Posterior vena cava (tissue), 2 donors: ENCODE measurements at regions of chr4 and their contacts with region 1.

Region 1: DNA sequence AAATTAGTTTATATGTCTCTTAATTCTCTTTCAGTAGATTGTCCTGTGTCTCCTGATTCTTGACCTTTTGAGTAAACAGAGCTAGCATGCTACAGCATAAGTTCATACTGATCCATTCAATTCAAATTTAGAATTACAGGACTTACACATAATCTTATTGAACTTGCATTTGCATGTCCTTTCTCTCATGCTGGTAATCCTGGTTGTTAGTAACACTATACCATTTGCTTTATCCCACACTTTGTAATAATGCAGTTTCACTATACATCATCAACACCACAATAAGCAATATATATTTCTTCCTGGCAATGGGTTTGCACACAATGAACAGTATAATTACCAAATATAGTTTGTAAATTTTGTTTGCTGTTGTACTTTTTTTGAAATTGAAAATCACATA is 937.2 kb upstream of the GRID2 start:
- DNase-seq: no peak

Region 2: GRCh38 chr4:92175250-92175649 is 808.7 kb after region 1 on chr4:
- intact Hi-C with region 1: loop called in 1 of 2 experiments (anchors 5 kb)
- DNase-seq: no peak